GM10248 (cell line): ENCODE measurements at regions of chr12 and their contacts with region 1.

Region 1: GRCh38 chr12:130601327-130601726 is 114.8 kb downstream of the RIMBP2 start:
- DNase-seq: no peak
- CTCF ChIP-seq: no peak

Region 2: GRCh38 chr12:130526813-130527212 is 74.5 kb before region 1 on chr12:
- CTCF ChIA-PET with region 1: no interaction called
- POLR2A ChIA-PET with region 1: no interaction called
- DNase-seq: no peak
- CTCF ChIP-seq: no peak

Region 3: DNA sequence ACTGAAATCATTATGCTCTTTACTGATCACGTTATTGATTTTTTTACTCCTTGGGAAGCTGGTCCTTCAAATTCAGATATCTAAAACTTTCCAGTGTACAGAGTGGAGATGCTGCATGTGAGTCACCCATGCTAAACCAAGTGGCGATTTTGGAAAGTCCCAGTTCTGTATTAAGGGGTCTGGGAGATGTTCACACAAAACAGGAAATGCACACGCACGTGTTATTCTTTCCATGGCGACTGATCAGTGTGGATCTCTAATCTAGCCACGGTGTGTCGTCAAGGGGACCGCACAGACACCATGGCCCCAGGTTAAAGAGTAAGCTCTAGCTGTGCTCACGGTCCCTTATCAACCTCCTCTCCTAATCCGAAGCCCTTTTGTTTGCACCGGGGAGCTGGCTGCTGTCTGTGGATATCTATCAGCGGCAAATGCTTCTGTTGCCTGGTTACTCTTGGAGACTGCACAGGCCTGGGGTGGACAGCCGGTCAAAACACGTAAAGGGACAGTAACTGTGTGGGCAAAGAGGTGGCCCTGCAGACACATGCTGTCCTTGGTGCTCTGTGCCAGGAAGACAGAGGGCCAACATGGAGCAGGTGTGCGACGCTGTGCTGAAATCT is 18.2 kb after region 1 on chr12:
- CTCF ChIA-PET with region 1: interaction called, 6 read pairs
- POLR2A ChIA-PET with region 1: interaction called, 11 read pairs
- DNase-seq: no peak
- CTCF ChIP-seq: no peak

Region 4: DNA sequence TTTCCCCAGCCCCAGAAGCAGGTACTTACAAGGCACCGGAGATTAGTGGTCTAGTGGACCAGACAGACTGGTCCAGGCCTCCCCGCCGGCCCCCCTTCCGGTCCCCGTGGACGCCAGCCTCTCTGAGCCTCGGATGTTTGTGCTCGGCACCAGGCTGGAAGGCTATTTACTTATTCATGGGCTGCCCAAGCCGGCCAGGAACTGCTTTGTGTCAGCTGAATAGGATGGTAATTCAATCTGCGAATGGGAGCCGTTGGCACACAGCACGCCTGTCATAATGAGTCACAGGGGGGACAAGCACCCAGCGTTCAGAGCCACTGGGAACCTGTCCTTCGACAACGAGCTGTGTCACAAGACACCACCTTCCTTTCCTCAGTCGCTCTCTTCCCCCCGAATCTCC is 32.4 kb after region 1 on chr12:
- CTCF ChIA-PET with region 1: no interaction called
- POLR2A ChIA-PET with region 1: no interaction called
- DNase-seq: no peak
- CTCF ChIP-seq: no peak